ENCODE measurements at regions of chr17 and their contacts with region 1.

Region 1: DNA sequence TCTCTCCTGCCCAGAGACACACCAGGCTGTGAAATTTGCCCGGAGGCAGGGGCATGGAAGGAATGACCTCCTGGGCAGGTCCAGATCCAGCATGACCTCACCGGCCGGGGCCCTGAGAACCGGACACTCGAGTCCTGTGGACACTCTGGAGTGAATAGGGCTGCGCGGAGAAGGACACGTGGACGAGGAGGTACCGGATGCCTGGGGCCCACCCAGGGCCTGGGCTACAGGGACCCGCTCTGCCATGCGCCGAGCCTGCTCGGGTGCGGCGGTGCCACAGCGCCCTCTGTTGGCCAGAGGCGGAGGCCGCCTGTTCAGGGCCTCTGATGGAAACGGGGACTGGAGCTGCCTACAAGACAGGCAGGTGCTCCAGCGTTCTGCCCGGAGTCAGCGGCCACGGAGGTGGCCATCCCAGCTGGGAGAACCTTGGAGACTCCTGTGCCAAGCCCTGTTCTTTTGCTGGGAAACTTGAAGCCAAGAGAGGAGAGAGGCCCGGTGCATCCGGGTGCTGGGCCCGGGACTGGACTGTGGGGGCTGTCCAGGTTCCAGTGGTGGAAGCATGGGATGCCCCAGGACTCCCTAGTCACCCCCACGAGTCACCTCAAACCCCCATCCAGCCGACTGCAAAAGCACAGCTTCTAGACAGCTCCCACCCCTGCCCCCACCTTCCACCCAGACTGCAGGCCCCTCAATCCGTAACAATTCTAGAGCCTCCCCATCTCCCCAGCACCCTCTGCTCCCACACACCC is 19.3 kb upstream of the NXPH3 start:
- DNase-seq: peak; percentile 94
- ATAC-seq: peak; percentile 89
- H3K4me3 Mint-ChIP-seq: no peak overlapping the region
- H3K27ac Mint-ChIP-seq: no peak overlapping the region
- H3K4me1 Mint-ChIP-seq: peaks cover 13% of the 10 kb centered on the region
- H3K27me3 Mint-ChIP-seq: peaks cover 8% of the 10 kb centered on the region
- CTCF ChIP-seq: peak; percentile 96

Region 2: DNA sequence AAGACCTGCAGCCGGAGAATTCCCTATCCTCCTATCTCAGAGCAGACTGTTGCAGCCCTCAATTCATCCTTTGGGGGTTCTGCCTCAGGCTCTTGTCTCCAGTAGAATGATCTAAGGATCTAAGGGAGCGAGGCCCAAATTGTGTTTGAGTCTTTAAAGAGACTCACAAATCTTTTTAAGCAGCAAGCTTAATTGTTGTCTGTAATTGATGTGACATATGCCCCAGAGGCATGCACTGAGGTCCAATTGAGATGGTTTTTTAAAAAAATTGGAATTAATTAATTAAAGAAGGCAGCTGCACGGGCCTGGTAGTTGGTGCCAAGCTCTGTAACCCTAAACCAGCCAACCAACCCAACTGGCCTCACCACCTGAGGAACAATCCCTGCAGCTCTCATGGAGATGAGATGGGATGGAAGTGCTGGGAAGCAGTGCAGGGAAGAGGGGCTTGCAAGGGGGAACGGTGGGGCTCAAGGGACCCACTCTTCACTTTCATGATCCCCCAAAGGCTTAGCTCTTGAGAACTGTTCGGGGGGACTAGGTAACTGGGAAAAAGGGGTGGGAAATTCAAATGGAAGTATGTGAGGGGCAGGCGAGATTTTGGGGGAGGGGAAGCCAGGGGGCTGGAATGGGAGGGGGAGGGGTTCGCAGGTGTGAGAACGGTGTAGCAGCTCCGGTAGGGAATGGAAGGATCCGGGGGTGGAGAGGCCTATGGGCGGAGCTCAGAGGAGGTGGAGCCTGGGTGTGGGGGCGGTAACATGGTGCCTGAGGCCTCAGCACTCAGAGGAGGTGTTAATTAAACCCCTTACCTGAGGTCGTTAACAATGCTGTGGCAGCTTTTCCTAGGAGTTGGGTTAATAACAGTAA is 185.2 kb before region 1 on chr17:
- CTCF ChIA-PET with region 1: interaction called, 11 read pairs
- POLR2A ChIA-PET with region 1: no interaction called
- DNase-seq: peak; percentile 95
- ATAC-seq: peak; percentile 99
- H3K4me3 Mint-ChIP-seq: peak overlapping the region; percentile 24; the same call in 1 of the 2 replicates
- H3K27ac Mint-ChIP-seq: peak overlapping the region; percentile 94
- H3K4me1 Mint-ChIP-seq: peaks cover 50% of the 10 kb centered on the region
- H3K27me3 Mint-ChIP-seq: no peaks in the 10 kb centered on the region
- CTCF ChIP-seq: no peak

Region 3: DNA sequence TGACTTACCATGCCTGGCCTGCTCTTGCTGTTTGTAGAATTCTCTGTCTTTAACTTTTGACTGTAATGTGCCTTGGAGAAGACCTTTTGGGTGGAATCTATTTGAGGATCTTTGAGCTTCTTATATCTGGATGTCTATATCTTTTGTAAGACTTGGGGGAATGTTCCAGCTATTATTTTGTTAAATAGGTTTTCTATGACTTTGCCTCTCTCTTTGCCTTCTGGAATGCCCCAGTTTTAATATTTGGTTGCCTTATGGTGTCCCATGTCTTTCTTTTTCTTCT is 131.5 kb before region 1 on chr17:
- CTCF ChIA-PET with region 1: interaction called, 12 read pairs
- POLR2A ChIA-PET with region 1: no interaction called
- DNase-seq: no peak
- ATAC-seq: no peak
- H3K4me3 Mint-ChIP-seq: no peak overlapping the region
- H3K27ac Mint-ChIP-seq: no peak overlapping the region
- H3K4me1 Mint-ChIP-seq: no peaks in the 10 kb centered on the region
- H3K27me3 Mint-ChIP-seq: peaks cover 18% of the 10 kb centered on the region
- CTCF ChIP-seq: no peak

Region 4: DNA sequence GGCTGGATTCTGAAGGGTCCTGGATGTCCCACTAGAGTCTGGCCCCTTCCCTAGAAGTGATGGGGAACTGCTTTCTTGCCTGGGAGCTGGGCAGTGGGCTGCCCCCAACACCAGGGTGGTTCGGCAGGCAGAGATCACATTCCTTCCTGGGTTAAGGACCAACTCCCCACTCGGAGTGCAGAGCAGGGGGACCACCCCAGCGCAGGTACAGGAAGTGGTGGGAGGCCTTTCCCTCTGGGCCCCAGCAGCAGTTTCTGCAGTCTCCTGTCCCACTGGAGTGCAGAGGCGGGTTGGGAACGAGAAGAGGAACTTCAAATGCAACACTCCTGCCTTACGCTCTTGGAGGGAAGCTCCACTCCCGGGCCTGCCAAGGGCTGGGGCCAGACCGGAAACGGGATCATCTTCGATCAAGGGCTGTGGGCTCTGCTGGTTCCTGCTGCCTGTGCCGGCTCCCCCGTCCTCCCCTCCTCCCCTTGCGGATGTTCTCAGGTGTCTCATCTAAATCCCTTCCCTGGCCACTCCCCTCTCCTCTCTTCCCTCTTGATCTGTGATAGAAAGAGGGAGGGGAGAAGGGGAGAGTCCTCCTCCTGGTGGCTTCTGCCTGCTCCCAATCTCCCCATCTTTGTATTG is 70.3 kb before region 1 on chr17:
- CTCF ChIA-PET with region 1: interaction called, 29 read pairs
- POLR2A ChIA-PET with region 1: no interaction called
- DNase-seq: peak; percentile 87
- ATAC-seq: peak; percentile 96
- H3K4me3 Mint-ChIP-seq: peak overlapping the region; percentile 35
- H3K27ac Mint-ChIP-seq: peak overlapping the region; percentile 89; the same call in 1 of the 2 replicates
- H3K4me1 Mint-ChIP-seq: peaks cover 65% of the 10 kb centered on the region
- H3K27me3 Mint-ChIP-seq: peaks cover 14% of the 10 kb centered on the region
- CTCF ChIP-seq: no peak

Region 5: DNA sequence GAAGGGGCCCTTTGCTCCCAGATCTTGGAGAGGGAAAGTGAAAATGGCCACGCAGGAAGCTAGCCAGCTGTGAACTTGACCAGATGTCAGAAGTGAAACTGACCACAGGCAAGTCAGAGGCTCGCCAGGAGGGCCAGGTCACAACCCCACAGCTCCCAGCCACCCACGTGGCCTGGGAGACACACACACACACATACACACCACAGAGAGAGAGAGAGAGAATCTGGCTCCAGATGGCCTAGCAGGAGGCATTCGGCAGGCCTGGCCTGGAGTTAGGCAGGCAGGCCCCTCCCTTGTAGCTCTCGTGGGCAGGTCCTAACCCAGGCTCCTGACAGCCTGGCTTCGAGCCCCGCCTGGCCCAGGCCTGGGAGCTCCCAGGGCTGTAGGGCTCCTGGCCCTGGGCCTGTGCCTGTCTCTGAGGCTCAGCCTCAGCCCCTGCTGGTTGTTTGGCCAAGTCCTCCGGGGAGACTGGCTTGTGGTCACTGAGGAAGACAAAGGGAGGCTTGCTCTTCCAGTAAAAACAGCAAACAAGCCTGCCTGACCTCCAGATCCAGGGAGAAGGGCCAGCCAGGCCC is 41.1 kb before region 1 on chr17:
- CTCF ChIA-PET with region 1: interaction called, 115 read pairs
- POLR2A ChIA-PET with region 1: no interaction called
- DNase-seq: peak; percentile 73
- ATAC-seq: peak; percentile 92
- H3K4me3 Mint-ChIP-seq: no peak overlapping the region
- H3K27ac Mint-ChIP-seq: peak overlapping the region; percentile 75
- H3K4me1 Mint-ChIP-seq: peaks cover 53% of the 10 kb centered on the region
- H3K27me3 Mint-ChIP-seq: no peaks in the 10 kb centered on the region; the same call in 1 of the 2 replicates
- CTCF ChIP-seq: no peak

Region 6: GRCh38 chr17:49637050-49637449 is 80.7 kb after region 1 on chr17:
- CTCF ChIA-PET with region 1: no interaction called
- POLR2A ChIA-PET with region 1: no interaction called
- DNase-seq: no peak
- ATAC-seq: no peak
- H3K4me3 Mint-ChIP-seq: no peak overlapping the region
- H3K27ac Mint-ChIP-seq: no peak overlapping the region
- H3K4me1 Mint-ChIP-seq: peaks cover 24% of the 10 kb centered on the region
- H3K27me3 Mint-ChIP-seq: no peaks in the 10 kb centered on the region
- CTCF ChIP-seq: no peak

Region 7: DNA sequence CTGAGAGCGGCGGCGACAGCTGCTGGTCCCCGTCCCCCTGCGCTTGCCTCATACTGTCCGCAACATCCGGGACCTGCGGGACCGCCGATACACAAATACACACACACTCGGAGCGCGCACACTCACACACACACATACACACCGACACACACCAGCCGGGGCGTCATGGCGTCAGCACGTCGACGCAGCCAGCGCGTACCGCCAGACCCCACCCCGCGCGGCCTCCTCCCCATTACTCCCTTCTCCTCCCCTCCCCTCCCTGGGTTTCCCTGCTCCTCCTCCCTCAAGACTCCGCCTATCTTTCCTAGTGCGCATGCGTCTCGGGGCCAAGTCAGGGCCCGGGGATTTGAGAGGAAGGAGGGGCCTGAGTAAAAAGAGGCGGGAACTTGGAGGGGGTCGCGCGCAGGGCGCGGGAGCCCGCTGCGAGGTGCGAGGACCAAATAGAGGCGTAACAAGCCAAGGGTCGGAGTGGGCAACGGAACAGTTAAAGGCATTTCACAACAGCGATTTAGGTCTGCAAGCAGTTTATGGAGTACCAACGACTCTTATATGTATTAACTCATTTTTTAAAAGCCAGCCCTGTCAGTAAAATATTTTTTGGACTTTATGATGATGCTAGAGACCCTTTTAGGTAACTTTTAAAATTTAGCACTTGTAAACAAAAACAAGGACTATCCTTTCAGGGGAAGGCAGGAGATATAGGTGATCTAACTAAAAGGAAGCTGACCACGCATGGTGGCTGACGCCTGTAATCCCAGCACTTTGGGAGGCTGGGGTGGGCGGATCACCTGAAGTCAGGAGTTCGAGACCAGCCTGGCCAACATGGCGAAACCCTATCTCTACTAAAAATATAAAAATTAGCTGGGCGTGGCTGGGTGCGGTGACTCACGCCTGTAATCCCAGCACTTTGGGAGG is 121.8 kb after region 1 on chr17 and contains the start of gene SPOP:
- CTCF ChIA-PET with region 1: interaction called, 12 read pairs
- POLR2A ChIA-PET with region 1: no interaction called
- DNase-seq: peak; percentile 99
- ATAC-seq: peak; percentile 97
- H3K4me3 Mint-ChIP-seq: peak within 1 kb of the TSS; percentile 88
- H3K27ac Mint-ChIP-seq: peak within 1 kb of the TSS; percentile 96
- H3K4me1 Mint-ChIP-seq: peaks cover 18% of the 10 kb centered on the region
- H3K27me3 Mint-ChIP-seq: peaks cover 38% of the 10 kb centered on the region
- CTCF ChIP-seq: no peak
- total RNA-seq, gene SPOP: 19.2 to 32.4 TPM (median 22.4 TPM) in 3 replicates